HepG2 (cell line): ENCODE measurements at regions of chr16 and their contacts with region 1.

Region 1: GRCh38 chr16:75305364-75306098 is 54.1 kb upstream of the BCAR1 start:
- DNase-seq: peak; percentile 99
- ATAC-seq: peak; percentile 87
- H3K4me3 ChIP-seq: peak overlapping the region; percentile 46 to 62 (median 55)
- H3K27ac ChIP-seq: peak overlapping the region; percentile 99
- H3K4me1 ChIP-seq: peaks cover 69% of the 10 kb centered on the region
- H3K27me3 ChIP-seq: no peaks in the 10 kb centered on the region; a peak in 1 of 5 replicates
- CTCF ChIP-seq: no peak; the same call in 1 of the 2 replicates
- EP300 ChIP-seq: peak; percentile 92 to 93
- POLR2A ChIP-seq: peak; percentile 67 to 95
- RAD21 ChIP-seq: no peak

Region 2: GRCh38 chr16:75053791-75054555 is 251.6 kb before region 1 on chr16:
- CTCF ChIA-PET with region 1: no interaction called
- POLR2A ChIA-PET with region 1: no interaction called
- in situ Hi-C with region 1: no loop called
- intact Hi-C with region 1: no loop called
- DNase-seq: peak; percentile 94
- ATAC-seq: peak; percentile 83
- H3K4me3 ChIP-seq: peak overlapping the region in 1 of 3 experiments; percentile 13; a peak in 1 of 6 replicates
- H3K27ac ChIP-seq: peak overlapping the region; percentile 64
- H3K4me1 ChIP-seq: peaks cover 51% of the 10 kb centered on the region
- H3K27me3 ChIP-seq: no peaks in the 10 kb centered on the region
- CTCF ChIP-seq: no peak
- EP300 ChIP-seq: peak in 1 of 2 experiments; percentile 53; a peak in 2 of 4 replicates
- POLR2A ChIP-seq: no peak
- RAD21 ChIP-seq: no peak

Region 3: DNA sequence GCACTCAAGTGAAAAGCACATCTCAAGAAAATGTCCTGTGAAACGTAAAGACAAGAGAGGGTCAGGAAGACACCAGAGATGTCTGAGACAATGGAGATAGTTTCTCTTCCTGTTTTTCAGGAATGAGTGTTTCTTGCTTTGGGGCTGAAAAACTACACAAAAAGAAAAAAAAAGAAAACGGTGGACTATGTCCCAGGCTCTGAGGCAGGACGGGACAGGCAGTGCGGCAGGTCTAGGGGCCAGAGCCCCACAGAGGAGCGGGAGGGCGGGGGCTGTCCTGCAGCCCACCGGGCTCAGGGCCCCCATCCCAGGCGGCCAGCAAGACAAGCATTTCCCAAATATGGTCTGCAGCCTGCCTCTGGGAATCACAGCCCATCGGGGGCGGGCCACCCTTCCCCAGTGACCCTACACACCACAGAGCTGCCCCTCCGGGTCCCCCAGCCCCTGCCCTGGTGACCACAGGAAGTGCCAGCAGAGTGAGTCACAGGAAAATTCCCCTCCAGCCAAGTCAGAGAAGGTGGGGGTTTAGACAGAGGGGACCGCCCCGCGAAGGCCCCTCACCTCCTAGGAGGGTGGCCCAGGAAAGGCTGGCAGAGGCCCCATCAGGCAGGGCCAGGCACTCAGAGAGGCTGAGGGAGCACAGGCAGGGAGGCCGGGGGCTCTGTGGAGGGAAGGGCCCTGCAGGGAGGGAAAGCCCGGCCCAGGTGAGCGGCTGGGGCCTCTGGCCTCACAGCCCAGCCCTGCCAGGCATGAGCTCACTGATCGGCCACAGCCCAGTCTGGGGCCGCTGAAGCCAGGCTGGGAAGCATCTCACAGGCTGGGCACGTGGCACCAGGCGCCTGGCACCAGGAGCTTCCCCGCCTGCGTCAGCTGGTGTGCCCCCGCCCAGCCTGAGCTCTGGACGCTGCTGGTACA is 60.4 kb before region 1 on chr16:
- CTCF ChIA-PET with region 1: no interaction called
- POLR2A ChIA-PET with region 1: interaction called, 312 read pairs
- in situ Hi-C with region 1: no loop called
- intact Hi-C with region 1: loop called (anchors 1 kb)
- DNase-seq: peak; percentile 99
- ATAC-seq: peak; percentile 80
- H3K4me3 ChIP-seq: peak overlapping the region; percentile 11 to 63 (median 25); a peak in 5 of 6 replicates
- H3K27ac ChIP-seq: peak overlapping the region; percentile 97
- H3K4me1 ChIP-seq: peaks cover 85% of the 10 kb centered on the region
- H3K27me3 ChIP-seq: no peaks in the 10 kb centered on the region
- CTCF ChIP-seq: peak; percentile 32
- EP300 ChIP-seq: peak in 1 of 2 experiments; percentile 96
- POLR2A ChIP-seq: peak in 1 of 2 experiments; percentile 91; a peak in 2 of 4 replicates
- RAD21 ChIP-seq: peak; percentile 73

Region 4: GRCh38 chr16:75265845-75266701 is 39.5 kb before region 1 on chr16:
- CTCF ChIA-PET with region 1: no interaction called
- POLR2A ChIA-PET with region 1: interaction called, 102 read pairs
- in situ Hi-C with region 1: loop called (anchors 5 kb)
- intact Hi-C with region 1: loop called (anchors 1 kb)
- DNase-seq: peak; percentile 84
- ATAC-seq: peak; percentile 30
- H3K4me3 ChIP-seq: peak overlapping the region; percentile 92 to 99 (median 96)
- H3K27ac ChIP-seq: peak overlapping the region; percentile 75
- H3K4me1 ChIP-seq: peaks cover 69% of the 10 kb centered on the region
- H3K27me3 ChIP-seq: no peaks in the 10 kb centered on the region
- CTCF ChIP-seq: peak; percentile 57
- EP300 ChIP-seq: 0 out of 4 replicates have a peak, but pooled peaks of 1 of the 2 experiments have one; percentile 10
- POLR2A ChIP-seq: peak in 1 of 2 experiments; percentile 27; a peak in 1 of 4 replicates
- RAD21 ChIP-seq: peak; percentile 87

Region 5: GRCh38 chr16:75279305-75279704 is 26.2 kb before region 1 on chr16:
- CTCF ChIA-PET with region 1: no interaction called
- POLR2A ChIA-PET with region 1: interaction called, 12 read pairs
- in situ Hi-C with region 1: no loop called
- intact Hi-C with region 1: no loop called
- DNase-seq: no peak
- ATAC-seq: peak; percentile 71
- H3K4me3 ChIP-seq: no peak overlapping the region
- H3K27ac ChIP-seq: no peak overlapping the region
- H3K4me1 ChIP-seq: peaks cover 15% of the 10 kb centered on the region; the same call in 1 of the 2 replicates
- H3K27me3 ChIP-seq: no peaks in the 10 kb centered on the region
- CTCF ChIP-seq: no peak
- EP300 ChIP-seq: no peak
- POLR2A ChIP-seq: no peak
- RAD21 ChIP-seq: no peak

Region 6: GRCh38 chr16:75377729-75378386 is 72.3 kb after region 1 on chr16:
- CTCF ChIA-PET with region 1: no interaction called
- POLR2A ChIA-PET with region 1: interaction called, 12 read pairs
- in situ Hi-C with region 1: no loop called
- intact Hi-C with region 1: no loop called
- DNase-seq: no peak
- ATAC-seq: no peak
- H3K4me3 ChIP-seq: no peak overlapping the region
- H3K27ac ChIP-seq: no peak overlapping the region
- H3K4me1 ChIP-seq: peaks cover 17% of the 10 kb centered on the region
- H3K27me3 ChIP-seq: no peaks in the 10 kb centered on the region
- CTCF ChIP-seq: no peak
- EP300 ChIP-seq: no peak
- POLR2A ChIP-seq: no peak
- RAD21 ChIP-seq: no peak

Region 7: DNA sequence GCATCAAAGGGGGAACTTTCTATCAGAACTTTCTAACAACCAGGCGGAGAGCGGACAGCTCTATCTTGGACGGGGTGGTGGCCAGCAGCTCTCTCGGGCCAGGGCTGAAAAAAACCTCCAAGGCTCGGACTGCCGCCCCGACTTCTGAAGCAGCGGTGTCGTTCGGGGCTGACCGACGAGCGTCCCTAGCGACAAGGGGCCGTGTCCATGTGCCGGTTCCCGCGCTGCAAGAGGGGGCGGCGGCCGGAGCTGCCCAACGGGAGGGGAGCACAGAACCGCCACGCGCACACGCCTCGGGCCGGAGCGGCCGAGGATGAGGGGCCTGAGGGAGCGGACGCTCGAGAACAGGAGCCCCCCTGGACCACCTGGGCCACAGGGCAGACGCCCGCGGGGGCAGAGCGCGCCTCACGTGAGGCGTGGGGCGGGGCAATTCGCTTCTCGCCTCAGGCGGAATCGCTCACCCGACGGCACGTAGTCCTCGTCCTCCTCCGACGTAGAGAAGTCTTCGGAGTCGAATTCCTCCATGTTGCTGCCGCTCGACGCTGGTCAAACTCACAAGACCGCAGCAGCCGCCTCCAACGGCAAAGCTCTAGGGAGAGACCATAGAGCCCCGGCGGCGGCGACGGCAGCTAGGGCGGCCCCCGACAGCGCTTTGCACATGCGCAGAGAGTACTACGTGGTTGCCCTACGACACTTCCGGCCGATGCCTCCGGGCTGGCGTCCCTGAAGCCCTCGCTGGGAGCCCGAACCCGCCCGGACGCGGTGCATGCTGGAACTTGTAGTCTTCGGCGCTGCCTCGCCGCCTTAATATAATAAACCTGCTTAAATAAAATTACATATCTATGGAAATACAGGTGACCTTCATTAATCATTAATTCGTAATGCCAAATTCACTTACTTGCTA is 127.5 kb after region 1 on chr16 and contains the start of gene CFDP1:
- CTCF ChIA-PET with region 1: no interaction called
- POLR2A ChIA-PET with region 1: interaction called, 14 read pairs
- in situ Hi-C with region 1: no loop called
- intact Hi-C with region 1: no loop called
- DNase-seq: peak; percentile 94
- ATAC-seq: peak; percentile 93
- H3K4me3 ChIP-seq: peak within 1 kb of the TSS; percentile 76 to 95 (median 78)
- H3K27ac ChIP-seq: peak within 1 kb of the TSS; percentile 94
- H3K4me1 ChIP-seq: peaks cover 58% of the 10 kb centered on the region
- H3K27me3 ChIP-seq: no peaks in the 10 kb centered on the region; a peak in 1 of 5 replicates
- CTCF ChIP-seq: peak; percentile 49
- EP300 ChIP-seq: peak in 1 of 2 experiments; percentile 11; a peak in 1 of 4 replicates
- POLR2A ChIP-seq: peak; percentile 81 to 88
- RAD21 ChIP-seq: peak; percentile 23; the same call in 1 of the 2 replicates
- total RNA-seq, gene CFDP1: 153 and 198 TPM in 2 replicates